ENCODE measurements at regions of chr15 and their contacts with region 1.

Region 1: DNA sequence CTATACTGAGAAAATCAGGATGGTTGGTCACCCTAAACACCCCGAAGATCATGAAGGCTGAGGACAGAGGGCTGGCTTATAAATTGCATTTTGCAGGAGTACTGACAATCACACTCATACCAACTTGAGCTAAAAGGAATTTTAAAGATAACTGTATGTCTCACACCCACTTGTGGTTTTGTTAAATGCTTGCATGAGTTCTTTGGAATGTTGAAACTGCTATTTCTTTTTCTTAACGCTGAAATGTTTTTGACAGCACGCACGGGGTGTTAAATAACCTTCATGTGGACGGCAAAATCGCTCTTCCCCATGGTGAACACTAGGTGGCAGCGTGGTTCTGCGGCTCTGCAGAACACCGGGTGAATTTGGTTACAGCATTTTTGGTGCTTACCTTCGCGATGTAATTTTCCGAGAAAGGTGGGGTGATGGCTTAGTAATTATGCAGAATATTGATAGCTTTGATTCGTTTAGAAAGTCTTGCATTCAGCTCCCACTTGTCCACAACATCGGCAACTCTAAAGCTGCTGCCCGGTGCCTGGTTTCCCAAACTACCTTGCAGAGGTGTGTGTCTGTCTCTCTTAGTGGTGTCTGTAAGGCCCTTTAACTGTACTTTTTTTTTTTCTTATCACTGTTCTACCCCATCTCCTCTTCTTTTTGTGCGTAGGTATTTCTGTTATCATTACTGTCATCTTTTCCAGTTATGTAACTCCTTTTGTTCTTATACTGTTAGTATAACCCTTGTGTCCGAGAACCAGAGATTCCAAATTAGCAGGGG is 51.7 kb downstream of the ARNT2 start:
- DNase-seq: peak; percentile 16
- ATAC-seq: peak; percentile 88
- H3K4me3 ChIP-seq: no peak overlapping the region
- H3K27ac ChIP-seq: no peak overlapping the region
- H3K4me1 ChIP-seq: no peaks in the 10 kb centered on the region
- H3K27me3 ChIP-seq: no peaks in the 10 kb centered on the region; a peak in 3 of 4 replicates
- CTCF ChIP-seq: peak; percentile 90 to 98 (median 97); a peak in 5 of 6 replicates
- EP300 ChIP-seq: no peak
- POLR2A ChIP-seq: no peak
- RAD21 ChIP-seq: peak; percentile 96

Region 2: DNA sequence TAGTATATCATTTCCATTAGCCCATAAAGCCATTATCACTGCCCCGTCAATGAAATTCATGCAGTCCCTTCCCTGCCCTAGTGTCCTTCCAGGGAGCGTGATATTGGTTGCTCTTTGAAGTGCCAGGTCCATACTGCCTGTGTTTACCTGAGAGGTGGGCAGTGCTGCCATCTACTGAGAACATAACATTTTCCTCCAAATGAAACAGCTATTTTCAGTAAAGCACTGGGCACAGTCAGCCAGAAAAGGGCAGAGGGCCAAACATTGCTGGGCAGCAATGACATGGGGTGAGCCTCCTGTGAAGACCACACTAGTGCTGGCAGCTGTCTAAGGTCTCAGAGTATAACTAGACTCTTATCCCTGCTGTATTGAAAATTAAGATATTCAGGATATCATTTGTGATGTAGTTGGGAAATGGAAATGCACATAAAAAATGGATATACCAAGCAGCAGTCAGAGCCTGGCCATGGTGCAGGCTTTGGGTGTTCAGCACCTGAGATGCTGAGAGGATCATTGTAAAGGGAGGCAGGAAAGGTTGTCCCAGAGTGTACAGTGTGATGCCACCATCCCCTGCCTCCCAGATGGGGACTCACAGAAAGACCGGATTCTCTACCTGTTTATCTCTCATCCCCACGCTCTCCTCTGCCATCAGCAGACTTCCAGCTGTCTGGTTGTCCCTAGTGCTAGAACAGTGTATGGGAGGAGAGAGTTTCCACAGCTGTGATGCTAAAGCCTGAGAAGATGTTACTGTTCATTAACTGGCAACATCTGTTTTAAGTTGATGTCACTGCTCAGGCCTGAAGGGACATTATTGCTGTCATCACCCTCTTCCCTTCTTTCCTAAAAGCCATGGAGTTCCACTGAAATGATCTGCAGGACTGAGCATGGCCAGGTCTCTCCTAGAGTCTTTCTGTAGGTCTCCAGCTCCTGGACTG is 57.1 kb after region 1 on chr15:
- CTCF ChIA-PET with region 1: interaction called, 4 read pairs
- POLR2A ChIA-PET with region 1: no interaction called
- RAD21 ChIA-PET with region 1: interaction called, 4 read pairs
- SMC1A ChIA-PET with region 1: interaction called, 3 read pairs
- in situ Hi-C with region 1: no loop called
- intact Hi-C with region 1: loop called (anchors 2 kb)
- DNase-seq: no peak
- ATAC-seq: peak; percentile 35; the same call in 1 of the 3 replicates
- H3K4me3 ChIP-seq: no peak overlapping the region
- H3K27ac ChIP-seq: no peak overlapping the region
- H3K4me1 ChIP-seq: no peaks in the 10 kb centered on the region
- H3K27me3 ChIP-seq: peaks cover 0 to 3% of the 10 kb centered on the region in 2 experiments; a peak in 1 of 4 replicates
- CTCF ChIP-seq: peak; percentile 7 to 32 (median 9); a peak in 2 of 6 replicates
- EP300 ChIP-seq: no peak
- POLR2A ChIP-seq: no peak
- RAD21 ChIP-seq: no peak

Region 3: DNA sequence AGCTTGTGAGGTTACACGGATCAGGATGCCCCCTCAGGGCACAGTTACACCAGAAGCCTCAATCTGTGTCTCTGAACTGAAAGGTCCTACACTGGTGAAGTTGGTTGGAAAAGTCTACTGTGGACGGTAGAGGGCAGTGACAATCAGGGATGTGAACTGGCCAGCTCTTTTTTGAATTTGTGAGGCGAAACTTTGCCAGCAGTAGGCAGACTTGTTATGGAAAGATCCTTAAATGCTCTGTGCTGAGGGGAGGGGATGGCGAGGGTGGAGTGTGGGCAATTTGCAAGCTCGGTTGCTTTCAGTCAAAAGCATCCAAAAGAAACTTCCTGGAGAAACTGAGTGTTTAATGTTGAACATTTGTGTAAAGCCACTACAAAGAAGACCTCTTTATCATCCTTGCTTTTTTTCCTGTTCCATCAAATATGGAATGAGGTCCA is 111.9 kb after region 1 on chr15:
- CTCF ChIA-PET with region 1: interaction called, 8 read pairs
- POLR2A ChIA-PET with region 1: no interaction called
- RAD21 ChIA-PET with region 1: no interaction called
- SMC1A ChIA-PET with region 1: interaction called, 3 read pairs
- in situ Hi-C with region 1: no loop called
- intact Hi-C with region 1: loop called (anchors 5 kb)
- DNase-seq: no peak
- ATAC-seq: peak; percentile 87
- H3K4me3 ChIP-seq: no peak overlapping the region
- H3K27ac ChIP-seq: no peak overlapping the region
- H3K4me1 ChIP-seq: no peaks in the 10 kb centered on the region
- H3K27me3 ChIP-seq: peaks cover 2 to 5% of the 10 kb centered on the region in 2 experiments; a peak in 3 of 4 replicates
- CTCF ChIP-seq: peak; percentile 56 to 69 (median 59); a peak in 4 of 6 replicates
- EP300 ChIP-seq: no peak
- POLR2A ChIP-seq: no peak
- RAD21 ChIP-seq: peak; percentile 71